Common myeloid progenitor, CD34-positive (primary cell): ENCODE measurements at regions of chr9 and their contacts with region 1.

Region 1: GRCh38 chr9:133094842-133095393 is 26.1 kb downstream of the RALGDS start:
- DNase-seq: no peak
- H3K4me3 ChIP-seq: no peak overlapping the region
- H3K27ac ChIP-seq: no peak overlapping the region
- H3K4me1 ChIP-seq: peaks cover 0 to 3% (median 0%) of the 10 kb centered on the region in 4 experiments
- H3K27me3 ChIP-seq: no peaks in the 10 kb centered on the region

Region 2: GRCh38 chr9:133108794-133109641 is 14.1 kb after region 1 on chr9:
- CTCF ChIA-PET with region 1: interaction called, 105 read pairs
- POLR2A ChIA-PET with region 1: no interaction called
- DNase-seq: no peak
- H3K4me3 ChIP-seq: no peak overlapping the region
- H3K27ac ChIP-seq: no peak overlapping the region
- H3K4me1 ChIP-seq: peaks cover 0 to 27% (median 27%) of the 10 kb centered on the region in 4 experiments
- H3K27me3 ChIP-seq: no peaks in the 10 kb centered on the region